Right cardiac atrium (tissue), 5 donors: ENCODE measurements at regions of chr12 and their contacts with region 1.

Region 1: GRCh38 chr12:50825372-50825838 is 17.3 kb upstream of the TMPRSS12 start:
- DNase-seq: no peak
- ATAC-seq: peak; percentile 68 to 82
- H3K4me3 ChIP-seq: no peak overlapping the region
- H3K27ac ChIP-seq: no peak overlapping the region
- H3K4me1 ChIP-seq: no peaks in the 10 kb centered on the region
- H3K27me3 ChIP-seq: no peaks in the 10 kb centered on the region

Region 2: GRCh38 chr12:50934981-50935807 is 109.8 kb after region 1 on chr12:
- intact Hi-C with region 1: loop called in 1 of 4 experiments (anchors 10 kb)
- DNase-seq: no peak
- ATAC-seq: peak; percentile 48 to 61
- H3K4me3 ChIP-seq: no peak overlapping the region
- H3K27ac ChIP-seq: peak overlapping the region; percentile 68
- H3K4me1 ChIP-seq: peaks cover 6% of the 10 kb centered on the region
- H3K27me3 ChIP-seq: no peaks in the 10 kb centered on the region

Region 3: DNA sequence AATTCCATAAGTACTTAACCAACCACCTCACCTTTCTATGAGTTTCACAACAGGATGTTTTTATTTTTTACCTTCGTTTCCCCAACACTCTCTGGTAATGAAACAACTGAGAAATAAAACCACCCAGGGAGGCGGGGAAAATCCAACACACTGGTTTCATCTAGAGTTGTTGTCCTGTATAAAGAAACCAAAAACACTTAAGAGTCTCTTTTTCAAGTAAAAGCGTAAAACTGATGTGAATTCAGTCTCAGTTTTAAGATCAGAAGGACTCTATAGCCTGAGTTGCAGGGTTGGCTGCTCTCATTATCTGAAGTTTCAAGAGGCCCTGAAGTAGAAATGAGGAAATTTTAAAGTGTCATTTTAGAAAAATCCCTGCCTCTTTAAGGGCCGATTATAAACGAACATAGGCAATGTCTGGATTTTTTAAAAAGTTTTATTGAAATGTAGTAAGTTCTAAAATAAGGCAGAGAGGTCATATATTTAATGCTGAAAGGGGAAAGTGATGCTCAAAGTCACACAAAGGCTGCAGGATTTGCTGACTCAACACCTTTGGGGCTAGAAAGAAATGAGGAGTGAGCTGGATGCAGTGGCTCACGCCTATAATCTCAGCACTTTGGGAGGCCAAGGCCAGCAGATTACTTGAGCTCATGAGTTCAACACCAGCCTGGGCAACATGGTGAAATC is 154.1 kb after region 1 on chr12:
- intact Hi-C with region 1: loop called in 1 of 4 experiments (anchors 5 kb)
- DNase-seq: no peak
- ATAC-seq: no peak
- H3K4me3 ChIP-seq: no peak overlapping the region
- H3K27ac ChIP-seq: no peak overlapping the region
- H3K4me1 ChIP-seq: peaks cover 2% of the 10 kb centered on the region
- H3K27me3 ChIP-seq: no peaks in the 10 kb centered on the region

Region 4: GRCh38 chr12:50986966-50987737 is 161.7 kb after region 1 on chr12:
- intact Hi-C with region 1: loop called (anchors 5 kb)
- DNase-seq: no peak
- ATAC-seq: peak; percentile 63 to 73
- H3K4me3 ChIP-seq: no peak overlapping the region
- H3K27ac ChIP-seq: peak overlapping the region; percentile 43
- H3K4me1 ChIP-seq: peaks cover 3% of the 10 kb centered on the region
- H3K27me3 ChIP-seq: no peaks in the 10 kb centered on the region

Region 5: DNA sequence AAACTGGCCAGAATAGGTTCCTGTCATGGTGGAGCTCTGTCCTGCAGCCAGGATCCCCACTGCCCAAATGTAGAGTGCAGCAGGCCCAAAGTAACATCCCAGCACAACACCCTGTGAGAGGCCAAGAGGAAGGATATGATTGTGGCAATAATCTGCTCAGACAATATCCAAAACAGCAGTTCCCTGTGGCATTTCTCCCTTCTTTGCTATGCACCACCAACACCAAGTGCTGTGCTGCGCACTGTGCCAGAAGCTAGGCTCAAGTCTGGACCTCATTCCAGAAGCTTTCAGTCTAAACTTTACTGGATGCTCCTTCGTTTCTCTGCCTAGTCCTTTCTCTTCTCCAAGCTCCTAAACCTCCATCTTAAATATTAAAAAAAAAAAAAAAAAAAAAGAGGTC is 167.4 kb after region 1 on chr12:
- intact Hi-C with region 1: loop called in 3 of 4 experiments (anchors 5 kb)
- DNase-seq: peak; percentile 54 to 79 (median 76)
- ATAC-seq: peak; percentile 38 to 56
- H3K4me3 ChIP-seq: no peak overlapping the region
- H3K27ac ChIP-seq: no peak overlapping the region
- H3K4me1 ChIP-seq: no peaks in the 10 kb centered on the region
- H3K27me3 ChIP-seq: no peaks in the 10 kb centered on the region

Region 6: DNA sequence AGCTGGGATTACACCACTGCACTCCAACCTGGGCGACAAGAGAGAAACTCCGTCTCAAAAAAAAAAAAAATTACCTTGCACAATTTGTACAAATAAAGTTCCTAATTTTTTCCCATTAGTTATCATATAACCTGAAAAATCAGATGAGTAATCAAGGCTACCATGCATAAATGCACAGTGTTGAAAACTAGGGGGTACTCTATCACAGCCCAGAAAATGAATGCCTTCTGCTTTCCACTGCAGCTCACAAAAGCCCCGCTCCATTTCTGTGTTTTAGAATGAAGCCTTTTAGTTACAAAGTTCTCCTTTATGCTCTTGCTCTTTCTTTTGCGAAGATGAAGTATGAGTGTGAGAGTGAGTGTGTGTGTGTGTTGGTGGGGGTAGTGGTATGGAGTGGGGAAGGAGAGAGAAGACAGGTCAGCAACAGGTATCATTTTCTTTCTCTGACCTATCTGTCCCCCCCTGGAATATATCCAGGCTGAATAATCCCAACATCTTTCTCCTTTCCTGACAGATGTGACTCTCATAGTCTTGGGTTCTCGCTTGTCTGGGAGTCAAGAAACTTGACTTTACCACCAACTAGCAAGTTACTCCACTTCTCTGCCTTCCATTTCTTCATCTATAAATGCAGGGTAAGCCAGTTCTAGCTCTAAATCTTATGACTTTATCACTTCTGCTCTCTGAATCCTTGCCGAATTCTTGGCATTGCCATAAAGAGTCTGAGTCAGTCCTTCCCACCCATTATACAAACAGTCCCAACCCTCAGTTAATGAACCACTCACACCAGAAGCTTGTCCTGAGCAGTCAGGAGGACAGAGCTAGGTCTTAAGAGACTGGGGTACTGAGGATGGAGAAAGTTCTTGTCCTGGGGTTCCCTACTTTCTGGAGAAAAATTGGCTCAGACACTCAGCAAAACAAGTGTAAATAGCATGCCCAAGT is 482.5 kb after region 1 on chr12:
- intact Hi-C with region 1: no loop called
- DNase-seq: no peak
- ATAC-seq: peak; percentile 57 to 97
- H3K4me3 ChIP-seq: no peak overlapping the region
- H3K27ac ChIP-seq: no peak overlapping the region
- H3K4me1 ChIP-seq: no peaks in the 10 kb centered on the region
- H3K27me3 ChIP-seq: no peaks in the 10 kb centered on the region

Region 7: GRCh38 chr12:51341259-51342007 is 516.0 kb after region 1 on chr12:
- intact Hi-C with region 1: loop called in 3 of 4 experiments (anchors 5 to 10 kb)
- DNase-seq: peak; percentile 52 to 77 (median 70)
- ATAC-seq: peak; percentile 77 to 86
- H3K4me3 ChIP-seq: peak overlapping the region; percentile 32
- H3K27ac ChIP-seq: no peak overlapping the region
- H3K4me1 ChIP-seq: no peaks in the 10 kb centered on the region
- H3K27me3 ChIP-seq: no peaks in the 10 kb centered on the region